Uterus (tissue), 4 donors: ENCODE measurements at regions of chr15 and their contacts with region 1.

Region 1: DNA sequence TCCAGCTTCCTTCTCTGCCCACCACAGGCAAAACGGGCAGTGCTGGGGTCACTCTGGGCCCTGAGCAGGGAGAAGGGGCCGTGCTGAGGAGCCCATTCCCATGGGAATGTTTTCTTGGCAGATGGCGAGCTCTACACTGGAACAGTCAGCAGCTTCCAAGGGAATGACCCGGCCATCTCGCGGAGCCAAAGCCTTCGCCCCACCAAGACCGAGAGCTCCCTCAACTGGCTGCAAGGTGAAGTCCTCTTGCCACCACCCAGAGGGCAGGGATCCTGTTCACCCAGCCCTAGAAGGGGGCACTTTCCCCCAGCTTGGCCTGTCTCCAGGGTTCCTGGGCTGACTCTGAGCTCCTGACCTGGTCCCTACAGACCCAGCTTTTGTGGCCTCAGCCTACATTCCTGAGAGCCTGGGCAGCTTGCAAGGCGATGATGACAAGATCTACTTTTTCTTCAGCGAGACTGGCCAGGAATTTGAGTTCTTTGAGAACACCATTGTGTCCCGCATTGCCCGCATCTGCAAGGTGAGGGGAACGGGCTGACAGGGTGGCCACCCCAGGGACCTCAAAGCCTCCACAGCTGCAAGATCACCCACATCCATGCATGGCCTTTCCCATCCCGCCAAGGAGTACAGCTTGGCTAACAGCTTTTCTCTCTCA is 12.4 kb downstream of the CIB1 start:
- DNase-seq: peak; percentile 72 to 74
- H3K4me3 ChIP-seq: no peak overlapping the region
- H3K27ac ChIP-seq: peak overlapping the region in 1 of 2 donors; percentile 49
- H3K4me1 ChIP-seq: no peaks in the 10 kb centered on the region
- H3K27me3 ChIP-seq: no peaks in the 10 kb centered on the region
- CTCF ChIP-seq: peak; percentile 57 to 78 (median 68)
- POLR2A ChIP-seq: no peak

Region 2: GRCh38 chr15:90054618-90055097 is 166.7 kb before region 1 on chr15:
- intact Hi-C with region 1: loop called (anchors 5 kb)
- DNase-seq: no peak
- H3K4me3 ChIP-seq: no peak overlapping the region
- H3K27ac ChIP-seq: peak overlapping the region in 1 of 2 donors; percentile 1
- H3K4me1 ChIP-seq: no peaks in the 10 kb centered on the region
- H3K27me3 ChIP-seq: no peaks in the 10 kb centered on the region
- CTCF ChIP-seq: no peak
- POLR2A ChIP-seq: no peak

Region 3: DNA sequence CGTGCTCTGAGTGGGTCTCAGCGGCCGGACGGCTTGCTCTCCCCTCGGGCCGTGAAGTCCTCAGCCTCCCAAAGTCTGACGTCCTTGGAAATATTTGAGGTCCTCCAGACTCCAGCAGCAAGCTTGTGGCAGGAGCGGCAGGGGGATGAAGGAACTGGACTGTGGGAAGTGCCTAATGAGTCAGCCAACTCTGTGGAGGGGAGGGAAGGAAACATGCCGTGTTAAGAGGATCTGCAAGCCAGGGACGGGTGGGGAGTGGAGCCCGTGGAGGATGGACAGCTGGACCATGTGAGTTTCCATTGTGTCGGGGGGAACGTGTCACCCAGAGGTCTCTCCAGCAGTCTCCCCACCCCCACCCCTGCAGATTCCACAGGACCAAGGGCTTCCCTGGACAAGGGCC is 79.7 kb before region 1 on chr15:
- intact Hi-C with region 1: no loop called
- DNase-seq: no peak
- H3K4me3 ChIP-seq: no peak overlapping the region
- H3K27ac ChIP-seq: no peak overlapping the region
- H3K4me1 ChIP-seq: no peaks in the 10 kb centered on the region
- H3K27me3 ChIP-seq: no peaks in the 10 kb centered on the region
- CTCF ChIP-seq: no peak
- POLR2A ChIP-seq: no peak

Region 4: GRCh38 chr15:90482124-90483011 is 261.0 kb after region 1 on chr15:
- intact Hi-C with region 1: no loop called
- DNase-seq: peak; percentile 40 to 71
- H3K4me3 ChIP-seq: no peak overlapping the region
- H3K27ac ChIP-seq: peak overlapping the region; percentile 63 to 73
- H3K4me1 ChIP-seq: no peaks in the 10 kb centered on the region
- H3K27me3 ChIP-seq: no peaks in the 10 kb centered on the region
- CTCF ChIP-seq: peak; percentile 81 to 92 (median 84)
- POLR2A ChIP-seq: no peak